ENCODE measurements at regions of chr1 and their contacts with region 1.

Region 1: DNA sequence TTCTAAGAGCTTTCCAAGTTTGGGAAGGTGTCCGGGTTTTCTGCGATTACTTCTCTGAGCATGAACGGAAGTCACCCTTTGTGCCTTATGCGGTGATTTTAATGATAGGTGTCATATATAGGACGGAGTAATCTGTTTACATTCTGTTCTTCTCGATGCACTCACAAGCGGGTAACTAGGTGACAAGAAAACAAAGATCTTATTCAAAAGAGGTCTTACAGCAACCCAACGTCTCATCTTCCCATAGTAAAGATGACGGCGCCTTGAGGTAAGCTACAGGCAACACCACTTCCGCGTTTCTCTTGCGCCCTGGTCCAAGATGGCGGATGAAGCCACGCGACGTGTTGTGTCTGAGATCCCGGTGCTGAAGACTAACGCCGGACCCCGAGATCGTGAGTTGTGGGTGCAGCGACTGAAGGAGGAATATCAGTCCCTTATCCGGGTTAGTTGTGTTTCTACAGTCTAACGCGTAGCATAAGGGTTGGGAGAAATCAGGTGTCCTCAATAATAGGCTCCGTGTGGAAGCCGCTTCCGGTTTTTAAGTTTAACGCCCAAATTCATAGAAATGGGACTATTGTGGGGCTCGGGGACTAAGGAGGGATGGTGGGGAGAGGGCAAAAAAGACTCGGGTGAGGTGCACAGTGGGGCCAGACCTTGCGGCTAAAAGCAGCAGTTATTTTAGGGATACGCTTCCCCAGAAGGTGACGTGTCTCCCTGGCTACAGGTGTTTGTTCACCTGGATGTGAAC is at the start of gene UFC1:
- DNase-seq: peak; percentile 87 to 93 (median 90)
- H3K4me3 ChIP-seq: peak within 1 kb of the TSS; percentile 37 to 100
- H3K4me3 Mint-ChIP-seq: peak within 1 kb of the TSS; percentile 96 to 100 (median 99)
- H3K27ac ChIP-seq: peak within 1 kb of the TSS; percentile 99
- H3K27ac Mint-ChIP-seq: peak within 1 kb of the TSS; percentile 99 to 100 (median 100)
- H3K4me1 ChIP-seq: peaks cover 23% of the 10 kb centered on the region
- H3K4me1 Mint-ChIP-seq: peaks cover 23 to 46% (median 32%) of the 10 kb centered on the region in 4 donors
- H3K27me3 ChIP-seq: no peaks in the 10 kb centered on the region
- H3K27me3 Mint-ChIP-seq: no peaks in the 10 kb centered on the region
- total RNA-seq, gene UFC1: 87.2 to 87.4 TPM

Region 2: DNA sequence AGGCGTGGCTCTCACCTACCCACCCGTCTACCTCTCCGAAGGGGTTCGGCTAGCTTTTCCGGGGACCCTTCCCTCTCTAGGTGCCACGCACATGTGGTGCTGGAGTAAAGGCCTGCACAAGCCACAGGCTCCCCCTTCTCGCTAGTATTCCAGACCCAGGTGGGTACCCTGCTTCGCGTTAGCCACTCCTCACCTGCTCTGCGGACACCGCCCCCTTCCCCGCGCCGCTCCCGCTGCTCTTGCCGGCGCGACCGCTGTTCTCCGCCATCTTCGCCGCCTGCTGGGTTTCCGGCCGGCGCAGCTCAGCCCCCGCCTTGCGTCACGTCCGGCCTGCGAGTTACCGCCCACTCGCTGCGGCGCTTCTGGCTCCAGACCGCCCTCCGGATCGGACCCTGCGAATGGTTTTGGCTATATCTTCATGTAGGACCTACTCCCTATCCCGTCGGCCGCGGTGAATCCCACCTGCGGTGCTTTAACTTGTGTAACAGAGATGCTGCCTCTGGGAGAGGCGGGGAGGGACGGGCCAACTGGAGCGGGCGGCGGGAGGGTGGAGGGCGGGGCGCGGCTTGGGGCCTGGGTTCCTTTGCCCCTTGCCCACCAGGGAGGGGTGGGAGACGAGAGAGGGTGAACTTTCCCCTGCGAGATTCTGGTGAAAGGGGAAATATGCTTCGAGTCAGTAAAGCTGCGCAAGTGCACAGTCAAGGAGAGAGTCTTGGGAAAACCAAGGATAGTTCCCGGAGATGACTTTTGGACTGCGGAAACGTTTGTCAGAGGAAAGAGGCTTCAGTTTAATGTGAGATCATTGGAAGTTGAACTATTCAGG is 35.9 kb before region 1 on chr1 and contains the starts of genes NIT1 and PFDN2:
- CTCF ChIA-PET with region 1: interaction called, 3 read pairs
- POLR2A ChIA-PET with region 1: interaction called, 14 read pairs
- intact Hi-C with region 1: loop called (anchors 1 kb)
- DNase-seq: peak; percentile 83 to 87 (median 86)
- H3K4me3 ChIP-seq: peak within 1 kb of the TSS; percentile 32 to 95
- H3K4me3 Mint-ChIP-seq: peak within 1 kb of the TSS; percentile 94 to 98 (median 96)
- H3K27ac ChIP-seq: peak within 1 kb of the TSS; percentile 94
- H3K27ac Mint-ChIP-seq: peak within 1 kb of the TSS; percentile 94 to 99 (median 98)
- H3K4me1 ChIP-seq: peaks cover 64% of the 10 kb centered on the region
- H3K4me1 Mint-ChIP-seq: peaks cover 36 to 79% (median 61%) of the 10 kb centered on the region in 4 donors
- H3K27me3 ChIP-seq: no peaks in the 10 kb centered on the region
- H3K27me3 Mint-ChIP-seq: no peaks in the 10 kb centered on the region
- total RNA-seq, gene NIT1: 49.0 to 50.5 TPM
- total RNA-seq, gene PFDN2: 40.8 to 41.0 TPM

Region 3: DNA sequence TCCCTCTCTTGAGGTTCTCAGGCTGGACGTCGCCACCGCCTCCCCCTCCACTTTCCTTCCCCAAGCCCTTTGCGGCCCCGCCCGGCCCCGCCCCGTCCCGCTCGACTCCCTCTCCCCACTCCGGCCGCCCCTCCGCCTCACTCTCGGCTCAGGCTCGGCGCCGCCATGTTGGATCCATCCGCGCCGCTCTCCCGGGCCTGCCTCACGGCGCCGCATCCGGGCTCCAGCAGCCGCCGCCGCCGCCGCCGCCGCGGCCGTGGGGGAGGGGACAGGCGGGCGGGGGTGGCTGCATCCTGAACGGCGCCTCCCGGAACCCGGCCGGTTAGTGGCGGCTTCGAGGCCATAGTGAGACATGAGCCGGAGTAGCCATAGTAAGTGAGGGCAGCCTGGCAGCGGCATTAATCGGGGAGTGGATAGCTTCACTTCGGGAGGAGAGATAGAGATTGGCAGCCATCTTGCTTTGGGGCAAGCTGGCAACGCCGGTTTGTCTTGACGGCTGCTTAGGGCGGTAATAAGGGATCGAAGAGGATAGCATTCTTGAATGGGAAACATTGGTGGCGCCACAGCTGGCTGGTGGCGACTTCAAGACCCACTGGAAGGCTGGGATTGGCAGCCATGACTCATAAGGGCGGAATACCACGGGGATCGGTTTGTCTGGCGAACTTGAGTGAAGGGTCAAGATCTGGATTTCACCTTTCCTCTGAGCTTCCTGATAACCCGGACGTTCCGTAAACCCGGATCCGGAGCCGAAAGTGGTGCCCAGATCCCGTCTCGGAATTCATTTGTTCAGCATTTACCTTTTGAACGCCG is 21.2 kb before region 1 on chr1 and contains the start of gene DEDD:
- CTCF ChIA-PET with region 1: interaction called, 3 read pairs
- POLR2A ChIA-PET with region 1: interaction called, 36 read pairs
- intact Hi-C with region 1: loop called (anchors 1 kb)
- DNase-seq: peak; percentile 92 to 95 (median 93)
- H3K4me3 ChIP-seq: peak within 1 kb of the TSS; percentile 80 to 100
- H3K4me3 Mint-ChIP-seq: peak within 1 kb of the TSS in 1 of 8 donors; percentile 91
- H3K27ac ChIP-seq: peak within 1 kb of the TSS; percentile 95
- H3K27ac Mint-ChIP-seq: peak within 1 kb of the TSS in 3 of 7 donors; percentile 91 to 99 (median 95)
- H3K4me1 ChIP-seq: peaks cover 51% of the 10 kb centered on the region
- H3K4me1 Mint-ChIP-seq: peaks cover 29 to 43% (median 40%) of the 10 kb centered on the region in 4 donors
- H3K27me3 ChIP-seq: no peaks in the 10 kb centered on the region
- H3K27me3 Mint-ChIP-seq: no peaks in the 10 kb centered on the region
- total RNA-seq, gene DEDD: 39.1 to 41.4 TPM

Region 4: DNA sequence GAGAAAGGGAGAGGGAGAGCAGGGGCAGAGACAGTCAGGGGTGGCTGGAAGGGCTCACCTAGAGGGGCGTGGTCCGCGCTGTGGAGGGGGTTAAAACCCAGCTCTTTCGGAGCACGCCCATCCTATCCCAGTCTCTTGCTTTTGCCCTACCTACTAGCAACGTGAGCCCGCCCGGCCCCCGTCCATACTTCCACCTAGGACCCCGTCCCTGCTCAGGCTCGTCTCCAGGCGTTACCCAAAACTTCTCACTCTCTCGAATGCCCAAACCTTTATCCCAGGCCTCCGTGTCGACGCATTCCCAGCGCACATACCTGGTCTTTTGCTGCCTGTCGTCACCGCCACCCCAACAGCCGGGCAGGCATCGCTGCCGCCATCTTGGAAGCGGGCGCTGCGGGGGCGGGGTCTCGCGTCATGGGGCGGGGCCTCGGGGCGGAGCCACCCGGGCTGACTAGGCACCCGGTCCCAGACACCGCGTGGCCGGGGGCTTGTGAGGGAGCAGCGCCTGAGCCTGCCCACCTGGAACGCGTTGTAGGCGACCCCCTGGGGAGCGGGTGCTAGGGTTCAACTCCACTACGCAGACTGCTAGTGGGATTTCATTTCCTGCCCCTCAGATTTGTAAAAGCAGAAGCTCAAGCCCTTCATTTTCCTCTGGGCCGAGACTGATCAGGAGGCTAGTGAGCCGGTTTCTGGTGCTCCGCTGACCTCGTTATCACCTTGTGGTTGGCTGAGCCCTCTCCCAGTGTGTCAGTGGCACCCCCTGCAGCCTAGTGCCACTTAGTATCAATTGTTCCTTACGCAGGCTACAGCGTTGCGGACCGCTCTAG is 23.5 kb after region 1 on chr1 and contains the start of gene B4GALT3:
- CTCF ChIA-PET with region 1: interaction called, 5 read pairs
- POLR2A ChIA-PET with region 1: interaction called, 26 read pairs
- intact Hi-C with region 1: no loop called
- DNase-seq: peak; percentile 89 to 94 (median 90)
- H3K4me3 ChIP-seq: peak within 1 kb of the TSS; percentile 90 to 97
- H3K4me3 Mint-ChIP-seq: peak within 1 kb of the TSS; percentile 98 to 100 (median 100)
- H3K27ac ChIP-seq: peak within 1 kb of the TSS; percentile 85
- H3K27ac Mint-ChIP-seq: peak within 1 kb of the TSS; percentile 95 to 100 (median 99)
- H3K4me1 ChIP-seq: peaks cover 56% of the 10 kb centered on the region
- H3K4me1 Mint-ChIP-seq: peaks cover 45 to 85% (median 68%) of the 10 kb centered on the region in 4 donors
- H3K27me3 ChIP-seq: no peaks in the 10 kb centered on the region
- H3K27me3 Mint-ChIP-seq: no peaks in the 10 kb centered on the region
- total RNA-seq, gene B4GALT3: 64.6 to 71.5 TPM

Region 5: DNA sequence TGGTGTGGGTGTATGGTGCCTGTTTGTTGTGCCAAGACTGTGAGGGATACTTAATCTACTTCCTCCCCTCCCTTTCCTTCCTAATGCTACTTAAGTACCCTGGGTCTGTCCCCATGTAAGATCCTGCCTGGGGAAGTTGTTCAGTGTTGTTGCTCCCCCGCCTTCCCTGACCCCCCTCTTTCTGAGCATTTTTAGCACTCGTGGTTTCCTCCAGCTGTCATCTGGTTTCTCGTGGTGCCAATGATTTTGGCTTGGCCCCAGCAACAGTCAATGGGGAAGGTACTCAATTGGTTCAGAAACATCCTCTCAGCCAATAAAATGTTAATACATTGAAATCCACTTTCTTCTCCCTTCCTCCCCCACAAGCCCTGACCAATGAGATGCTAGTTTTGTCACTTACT is 31.4 kb after region 1 on chr1:
- CTCF ChIA-PET with region 1: interaction called, 5 read pairs
- POLR2A ChIA-PET with region 1: interaction called, 26 read pairs
- intact Hi-C with region 1: loop called (anchors 5 kb)
- DNase-seq: peak; percentile 86 to 92 (median 88)
- H3K4me3 ChIP-seq: peak overlapping the region; percentile 8 to 25
- H3K4me3 Mint-ChIP-seq: peak overlapping the region; percentile 73 to 89 (median 83)
- H3K27ac ChIP-seq: peak overlapping the region; percentile 47
- H3K27ac Mint-ChIP-seq: peak overlapping the region; percentile 86 to 96 (median 92)
- H3K4me1 ChIP-seq: peaks cover 94% of the 10 kb centered on the region
- H3K4me1 Mint-ChIP-seq: peaks cover 57 to 88% (median 78%) of the 10 kb centered on the region in 4 donors
- H3K27me3 ChIP-seq: no peaks in the 10 kb centered on the region
- H3K27me3 Mint-ChIP-seq: no peaks in the 10 kb centered on the region

Region 6: DNA sequence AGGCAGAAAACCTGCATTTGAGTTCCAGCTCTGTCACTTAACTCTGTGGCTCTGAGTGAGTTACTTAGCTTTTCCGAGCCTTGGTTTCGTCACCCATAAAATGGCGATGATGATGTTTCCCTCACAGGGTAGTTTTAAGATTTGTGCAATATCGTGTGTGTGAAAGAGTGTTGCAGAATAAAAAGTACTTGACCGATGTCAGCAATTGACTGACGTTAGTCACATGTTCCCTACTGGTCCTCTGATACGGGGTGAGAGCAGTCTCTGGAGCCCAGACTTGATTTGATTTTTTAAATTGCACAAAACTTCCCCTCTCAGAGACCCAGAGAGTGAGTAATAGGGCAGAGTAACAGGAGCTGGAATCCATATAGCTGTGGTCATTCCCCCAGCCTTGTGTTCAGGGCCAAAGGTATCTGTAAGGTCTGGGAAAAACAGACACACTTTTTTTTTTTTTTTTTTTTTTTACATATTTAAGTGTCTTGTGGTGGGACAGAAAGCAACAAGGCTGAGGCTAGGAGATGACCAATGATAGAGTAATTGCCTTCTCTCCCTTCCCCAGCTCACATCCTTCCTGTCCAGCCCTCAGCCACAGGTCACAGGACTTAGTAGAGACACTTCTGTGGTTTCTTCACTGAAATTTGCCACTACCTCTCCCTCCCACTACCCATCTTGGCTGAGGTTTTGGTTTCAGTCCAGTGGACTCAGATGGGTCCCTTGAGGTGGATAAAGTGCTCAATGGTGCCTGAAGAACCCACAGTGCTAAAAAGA is 63.3 kb after region 1 on chr1:
- CTCF ChIA-PET with region 1: no interaction called
- POLR2A ChIA-PET with region 1: no interaction called
- intact Hi-C with region 1: no loop called
- DNase-seq: no peak
- H3K4me3 ChIP-seq: no peak overlapping the region
- H3K4me3 Mint-ChIP-seq: no peak overlapping the region
- H3K27ac ChIP-seq: no peak overlapping the region
- H3K27ac Mint-ChIP-seq: peak overlapping the region in 5 of 7 donors; percentile 4 to 67 (median 12)
- H3K4me1 ChIP-seq: peaks cover 13% of the 10 kb centered on the region
- H3K4me1 Mint-ChIP-seq: peaks cover 9 to 37% (median 29%) of the 10 kb centered on the region in 4 donors
- H3K27me3 ChIP-seq: no peaks in the 10 kb centered on the region
- H3K27me3 Mint-ChIP-seq: no peaks in the 10 kb centered on the region

Measured in CD4-positive, alpha-beta memory T cell (primary cell).